ENCODE measurements at regions of chr1 and their contacts with region 1.

Region 1: DNA sequence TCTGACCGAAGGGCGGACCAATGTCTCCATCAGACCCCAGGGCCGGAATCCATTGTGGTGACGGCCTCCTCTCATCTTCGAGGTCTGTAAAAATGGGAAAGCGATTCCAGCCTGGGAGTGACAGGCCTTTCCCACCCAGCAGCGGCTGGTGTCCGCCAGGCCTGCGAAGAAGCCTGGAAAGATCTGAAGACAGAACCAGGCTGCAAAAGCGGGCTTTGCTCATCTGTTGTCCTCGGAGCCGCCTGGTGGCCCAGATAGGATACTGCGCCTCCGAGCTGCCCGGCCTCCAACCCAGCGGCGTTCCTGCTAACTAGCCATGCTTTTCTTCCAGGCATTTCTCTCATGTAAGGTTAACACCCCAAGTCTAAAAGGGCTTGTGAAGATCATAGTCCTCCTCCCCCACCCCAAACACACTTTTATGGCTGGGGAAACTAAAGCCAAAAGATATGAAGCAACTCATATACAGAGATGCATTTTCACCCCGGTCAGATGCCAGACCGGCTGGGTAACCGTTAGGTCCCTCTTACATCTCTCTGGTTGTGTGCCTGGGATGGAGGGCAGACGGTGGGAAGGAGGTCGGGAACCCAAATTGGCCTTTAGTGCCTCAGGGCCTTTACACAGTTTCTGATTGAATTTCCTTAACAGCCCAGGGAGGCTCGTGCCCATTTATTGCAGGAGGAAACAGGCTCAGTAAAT is 1.9 kb upstream of the DHRS3 start:
- DNase-seq: peak; percentile 73
- H3K4me3 ChIP-seq: peak overlapping the region; percentile 6 to 87 (median 49)
- H3K27ac ChIP-seq: peak overlapping the region; percentile 89
- H3K4me1 ChIP-seq: peaks cover 22% of the 10 kb centered on the region
- H3K27me3 ChIP-seq: no peaks in the 10 kb centered on the region
- CTCF ChIP-seq: peak; percentile 98

Region 2: GRCh38 chr1:11985851-11986250 is 634.1 kb before region 1 on chr1:
- CTCF ChIA-PET with region 1: no interaction called
- dilution Hi-C with region 1: no loop called
- in situ Hi-C with region 1: no loop called
- intact Hi-C with region 1: no loop called
- DNase-seq: no peak
- H3K4me3 ChIP-seq: no peak overlapping the region
- H3K27ac ChIP-seq: no peak overlapping the region
- H3K4me1 ChIP-seq: peaks cover 20% of the 10 kb centered on the region
- H3K27me3 ChIP-seq: no peaks in the 10 kb centered on the region
- CTCF ChIP-seq: no peak

Region 3: GRCh38 chr1:12113433-12114339 is 506.3 kb before region 1 on chr1:
- CTCF ChIA-PET with region 1: no interaction called
- dilution Hi-C with region 1: no loop called
- in situ Hi-C with region 1: no loop called
- intact Hi-C with region 1: loop called (anchors 1 kb)
- DNase-seq: peak; percentile 24
- H3K4me3 ChIP-seq: no peak overlapping the region
- H3K27ac ChIP-seq: no peak overlapping the region
- H3K4me1 ChIP-seq: peaks cover 8% of the 10 kb centered on the region
- H3K27me3 ChIP-seq: no peaks in the 10 kb centered on the region
- CTCF ChIP-seq: no peak

Region 4: GRCh38 chr1:12314333-12314903 is 305.5 kb before region 1 on chr1:
- CTCF ChIA-PET with region 1: no interaction called
- dilution Hi-C with region 1: no loop called
- in situ Hi-C with region 1: no loop called
- intact Hi-C with region 1: loop called (anchors 1 kb)
- DNase-seq: no peak
- H3K4me3 ChIP-seq: no peak overlapping the region
- H3K27ac ChIP-seq: no peak overlapping the region
- H3K4me1 ChIP-seq: no peaks in the 10 kb centered on the region
- H3K27me3 ChIP-seq: no peaks in the 10 kb centered on the region
- CTCF ChIP-seq: peak; percentile 21 to 31

Region 5: DNA sequence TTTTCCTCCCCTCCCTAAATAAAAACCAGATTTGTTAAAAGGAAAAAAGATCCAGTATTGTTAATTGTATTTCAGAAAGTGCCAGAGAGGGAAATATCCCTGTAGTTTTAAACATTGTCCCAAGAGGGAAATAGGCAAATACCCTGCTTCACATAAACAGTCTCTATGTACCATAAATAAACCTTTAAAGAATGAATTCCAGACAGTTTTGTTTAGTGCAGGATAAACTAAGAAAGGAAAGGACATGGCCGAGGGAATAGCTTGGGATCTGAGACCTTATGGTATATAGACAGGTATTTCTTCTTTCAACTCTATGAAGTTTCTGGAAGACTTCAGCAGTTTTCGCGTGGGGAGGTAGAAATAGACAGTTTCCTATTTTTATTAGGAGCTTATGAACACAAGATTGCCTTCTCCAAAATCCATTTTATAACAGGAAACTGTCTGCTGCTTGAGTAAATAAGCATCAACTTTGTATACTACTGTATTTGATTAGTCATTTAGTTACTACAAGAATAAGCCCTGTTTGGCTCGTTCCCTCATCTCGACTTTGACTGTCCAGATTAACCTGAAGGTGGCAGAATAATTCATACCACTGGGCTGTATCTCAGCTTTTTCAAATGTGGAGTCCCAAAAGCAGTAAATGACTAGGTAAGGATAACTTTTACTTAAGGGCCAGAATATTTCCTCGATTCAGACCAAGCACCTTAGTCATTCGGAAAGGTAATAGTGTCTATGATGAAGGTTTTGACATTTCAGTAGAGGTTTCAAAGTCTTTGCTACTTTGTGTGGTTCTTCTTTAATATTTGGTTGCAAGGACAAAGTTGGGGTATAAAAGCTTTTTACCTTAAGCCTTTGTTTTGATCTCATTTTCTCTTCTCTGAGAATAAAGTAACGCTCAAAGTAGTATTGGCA is 212.6 kb before region 1 on chr1:
- CTCF ChIA-PET with region 1: interaction called, 5 read pairs
- dilution Hi-C with region 1: no loop called
- in situ Hi-C with region 1: no loop called
- intact Hi-C with region 1: loop called (anchors 1 kb)
- DNase-seq: peak; percentile 52
- H3K4me3 ChIP-seq: no peak overlapping the region
- H3K27ac ChIP-seq: no peak overlapping the region
- H3K4me1 ChIP-seq: no peaks in the 10 kb centered on the region
- H3K27me3 ChIP-seq: no peaks in the 10 kb centered on the region
- CTCF ChIP-seq: peak; percentile 37 to 49

Region 6: GRCh38 chr1:12477936-12478611 is 141.9 kb before region 1 on chr1:
- CTCF ChIA-PET with region 1: no interaction called
- dilution Hi-C with region 1: no loop called
- in situ Hi-C with region 1: loop called in 1 of 2 experiments (anchors 25 kb)
- intact Hi-C with region 1: loop called (anchors 1 kb)
- DNase-seq: peak; percentile 96
- H3K4me3 ChIP-seq: no peak overlapping the region
- H3K27ac ChIP-seq: peak overlapping the region; percentile 5
- H3K4me1 ChIP-seq: peaks cover 63% of the 10 kb centered on the region
- H3K27me3 ChIP-seq: no peaks in the 10 kb centered on the region
- CTCF ChIP-seq: no peak

Region 7: GRCh38 chr1:12596007-12596821 is 23.7 kb before region 1 on chr1:
- CTCF ChIA-PET with region 1: interaction called, 3 read pairs
- dilution Hi-C with region 1: no loop called
- in situ Hi-C with region 1: no loop called
- intact Hi-C with region 1: loop called (anchors 1 kb)
- DNase-seq: peak; percentile 84
- H3K4me3 ChIP-seq: peak overlapping the region in 2 of 3 experiments; percentile 6 to 10
- H3K27ac ChIP-seq: peak overlapping the region; percentile 68
- H3K4me1 ChIP-seq: peaks cover 37% of the 10 kb centered on the region
- H3K27me3 ChIP-seq: no peaks in the 10 kb centered on the region
- CTCF ChIP-seq: no peak

Measured in mammary epithelial cell (primary cell).